ENCODE measurements at regions of chr16 and their contacts with region 1.

Region 1: DNA sequence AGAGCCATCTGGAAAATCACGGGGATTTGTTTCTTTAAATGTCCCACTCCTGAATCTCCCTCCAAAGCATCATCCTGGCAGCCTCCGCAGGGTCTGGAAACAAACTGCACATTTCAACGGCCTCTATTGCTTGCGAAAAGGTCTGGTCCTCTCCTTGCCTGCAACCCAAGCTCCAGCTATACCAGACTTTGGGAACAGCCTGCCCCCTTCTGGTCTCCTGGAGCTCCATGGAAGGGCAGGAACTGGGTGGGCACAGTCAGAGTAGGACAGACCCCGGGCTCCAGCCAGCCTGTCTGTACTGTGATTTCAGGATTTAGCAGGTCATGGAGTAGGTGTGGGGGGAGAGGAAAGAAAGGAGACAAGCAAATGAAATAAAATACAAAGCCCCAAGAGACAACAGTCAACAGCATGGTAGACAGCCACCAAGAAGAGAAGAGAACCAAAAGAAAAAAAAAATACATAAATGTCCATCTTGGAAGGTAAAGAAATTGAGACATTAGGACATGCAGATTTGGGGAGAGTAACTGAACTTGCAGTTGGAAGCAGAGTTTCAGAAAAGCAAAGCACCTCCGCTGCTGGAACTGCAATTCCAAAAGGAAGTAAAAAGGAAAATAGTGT is 2.7 kb downstream of the XYLT1 start:
- DNase-seq: peak; percentile 77
- ATAC-seq: peak; percentile 78
- H3K4me3 Mint-ChIP-seq: peak overlapping the region; percentile 39; the same call in 1 of the 2 replicates
- H3K27ac Mint-ChIP-seq: no peak overlapping the region
- H3K4me1 Mint-ChIP-seq: peaks cover 54% of the 10 kb centered on the region
- H3K27me3 Mint-ChIP-seq: peaks cover 16% of the 10 kb centered on the region
- CTCF ChIP-seq: no peak

Region 2: DNA sequence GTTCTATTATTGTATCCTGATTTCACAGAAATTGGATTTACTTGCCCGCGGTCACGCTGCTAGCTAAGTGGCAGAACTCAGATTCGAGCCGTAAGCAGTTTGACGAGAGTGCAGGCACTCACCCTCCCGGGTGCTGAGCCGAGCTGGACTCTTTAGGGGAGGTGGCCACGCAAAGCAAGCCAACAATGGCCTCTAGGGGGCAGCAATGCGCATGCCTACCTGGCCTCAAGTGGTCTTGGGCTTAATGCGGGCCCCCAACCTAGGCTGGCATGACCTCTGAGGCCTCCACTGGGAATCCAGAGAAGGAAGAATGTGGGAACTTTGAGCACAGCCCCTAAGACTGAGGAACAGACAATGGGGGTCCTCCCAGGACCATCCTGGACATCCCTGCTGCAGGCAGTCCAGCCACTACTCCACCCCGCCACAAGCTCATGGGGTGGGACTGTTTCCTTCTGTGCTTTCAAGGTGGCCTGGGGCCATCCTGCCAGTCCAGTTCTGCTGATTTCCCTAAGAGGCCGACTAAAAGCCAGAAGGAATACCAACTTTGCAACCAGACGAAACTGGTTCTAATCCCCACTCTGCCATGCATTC is 273.7 kb before region 1 on chr16:
- CTCF ChIA-PET with region 1: interaction called, 14 read pairs
- POLR2A ChIA-PET with region 1: no interaction called
- DNase-seq: peak; percentile 87
- ATAC-seq: peak; percentile 97
- H3K4me3 Mint-ChIP-seq: no peak overlapping the region
- H3K27ac Mint-ChIP-seq: no peak overlapping the region
- H3K4me1 Mint-ChIP-seq: peaks cover 3% of the 10 kb centered on the region
- H3K27me3 Mint-ChIP-seq: no peaks in the 10 kb centered on the region
- CTCF ChIP-seq: peak; percentile 78

Region 3: DNA sequence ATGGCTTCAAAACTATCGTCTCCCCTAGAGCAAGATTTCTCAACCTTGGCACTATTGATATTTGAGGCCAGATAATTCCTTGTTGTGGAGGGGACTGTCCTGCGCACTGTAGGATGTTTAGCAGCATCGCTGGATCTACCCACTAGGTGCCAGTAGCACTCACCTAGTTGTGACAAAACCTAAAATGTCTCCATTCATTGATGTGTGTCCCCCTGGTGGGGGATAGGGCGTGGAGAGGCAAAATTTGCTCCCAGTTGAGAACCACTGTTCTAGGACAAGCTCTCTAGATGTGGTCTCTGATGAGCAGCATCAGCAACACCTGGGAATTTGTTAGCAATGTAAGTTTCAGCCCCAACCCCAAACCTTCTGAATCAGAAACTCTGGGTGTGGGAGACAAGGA is 256.2 kb before region 1 on chr16:
- CTCF ChIA-PET with region 1: interaction called, 25 read pairs
- POLR2A ChIA-PET with region 1: no interaction called
- DNase-seq: peak; percentile 65
- ATAC-seq: peak; percentile 95
- H3K4me3 Mint-ChIP-seq: no peak overlapping the region
- H3K27ac Mint-ChIP-seq: no peak overlapping the region
- H3K4me1 Mint-ChIP-seq: peaks cover 19% of the 10 kb centered on the region
- H3K27me3 Mint-ChIP-seq: no peaks in the 10 kb centered on the region
- CTCF ChIP-seq: peak; percentile 50

Region 4: DNA sequence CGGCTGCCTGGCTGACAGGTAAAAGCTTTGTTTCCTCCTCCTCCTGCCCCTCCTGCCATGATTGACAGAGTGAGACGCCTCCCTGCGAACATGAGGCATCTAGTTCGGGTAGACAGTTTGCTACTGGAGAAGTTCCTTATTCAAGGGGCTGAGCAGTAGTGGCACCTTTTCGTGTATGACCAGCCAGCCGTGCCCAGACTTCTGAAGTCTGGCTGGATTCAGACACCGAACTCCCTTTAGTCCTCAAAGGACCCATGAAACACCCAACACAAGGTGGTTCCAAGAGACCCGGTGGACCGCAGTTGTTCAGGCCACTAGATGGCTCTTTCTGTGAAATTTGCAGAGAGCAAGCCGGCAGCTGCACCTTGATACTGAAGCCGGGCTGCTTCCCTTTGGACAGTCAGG is 190.1 kb before region 1 on chr16:
- CTCF ChIA-PET with region 1: interaction called, 57 read pairs
- POLR2A ChIA-PET with region 1: no interaction called
- DNase-seq: peak; percentile 62
- ATAC-seq: peak; percentile 83
- H3K4me3 Mint-ChIP-seq: no peak overlapping the region
- H3K27ac Mint-ChIP-seq: no peak overlapping the region
- H3K4me1 Mint-ChIP-seq: peaks cover 27% of the 10 kb centered on the region
- H3K27me3 Mint-ChIP-seq: no peaks in the 10 kb centered on the region
- CTCF ChIP-seq: no peak

Region 5: DNA sequence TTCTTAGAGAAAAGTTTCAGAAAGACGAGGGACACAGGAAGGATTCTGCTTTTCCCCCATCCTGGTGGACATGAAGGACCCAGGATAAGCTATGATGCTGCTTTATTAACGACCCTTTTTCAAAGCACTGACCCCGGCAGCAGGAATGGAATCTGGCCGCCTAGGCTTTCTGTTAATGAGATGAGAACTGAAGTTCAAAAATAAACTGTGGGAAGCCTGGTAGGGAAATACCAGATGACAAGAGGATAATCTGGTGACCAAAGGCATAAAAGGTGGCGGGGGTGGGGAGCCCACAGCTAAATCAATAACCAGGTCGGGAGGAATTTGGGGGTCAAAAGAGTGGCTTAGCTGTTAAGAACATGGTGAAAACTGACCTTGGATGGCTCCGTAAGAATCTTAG is 168.2 kb before region 1 on chr16:
- CTCF ChIA-PET with region 1: interaction called, 12 read pairs
- POLR2A ChIA-PET with region 1: no interaction called
- DNase-seq: no peak
- ATAC-seq: no peak
- H3K4me3 Mint-ChIP-seq: no peak overlapping the region
- H3K27ac Mint-ChIP-seq: peak overlapping the region; percentile 91; the same call in 1 of the 2 replicates
- H3K4me1 Mint-ChIP-seq: peaks cover 63% of the 10 kb centered on the region
- H3K27me3 Mint-ChIP-seq: no peaks in the 10 kb centered on the region
- CTCF ChIP-seq: no peak

Region 6: GRCh38 chr16:17369421-17370222 is 98.4 kb before region 1 on chr16:
- CTCF ChIA-PET with region 1: interaction called, 22 read pairs
- POLR2A ChIA-PET with region 1: no interaction called
- DNase-seq: no peak
- ATAC-seq: no peak
- H3K4me3 Mint-ChIP-seq: no peak overlapping the region; the same call in 1 of the 2 replicates
- H3K27ac Mint-ChIP-seq: peak overlapping the region; percentile 79
- H3K4me1 Mint-ChIP-seq: peaks cover 85% of the 10 kb centered on the region
- H3K27me3 Mint-ChIP-seq: no peaks in the 10 kb centered on the region
- CTCF ChIP-seq: no peak

Region 7: GRCh38 chr16:17423221-17423620 is 44.8 kb before region 1 on chr16:
- CTCF ChIA-PET with region 1: interaction called, 13 read pairs
- POLR2A ChIA-PET with region 1: no interaction called
- DNase-seq: peak; percentile 19
- ATAC-seq: peak; percentile 95
- H3K4me3 Mint-ChIP-seq: no peak overlapping the region
- H3K27ac Mint-ChIP-seq: peak overlapping the region; percentile 96
- H3K4me1 Mint-ChIP-seq: peaks cover 34% of the 10 kb centered on the region
- H3K27me3 Mint-ChIP-seq: no peaks in the 10 kb centered on the region
- CTCF ChIP-seq: no peak

Region 8: DNA sequence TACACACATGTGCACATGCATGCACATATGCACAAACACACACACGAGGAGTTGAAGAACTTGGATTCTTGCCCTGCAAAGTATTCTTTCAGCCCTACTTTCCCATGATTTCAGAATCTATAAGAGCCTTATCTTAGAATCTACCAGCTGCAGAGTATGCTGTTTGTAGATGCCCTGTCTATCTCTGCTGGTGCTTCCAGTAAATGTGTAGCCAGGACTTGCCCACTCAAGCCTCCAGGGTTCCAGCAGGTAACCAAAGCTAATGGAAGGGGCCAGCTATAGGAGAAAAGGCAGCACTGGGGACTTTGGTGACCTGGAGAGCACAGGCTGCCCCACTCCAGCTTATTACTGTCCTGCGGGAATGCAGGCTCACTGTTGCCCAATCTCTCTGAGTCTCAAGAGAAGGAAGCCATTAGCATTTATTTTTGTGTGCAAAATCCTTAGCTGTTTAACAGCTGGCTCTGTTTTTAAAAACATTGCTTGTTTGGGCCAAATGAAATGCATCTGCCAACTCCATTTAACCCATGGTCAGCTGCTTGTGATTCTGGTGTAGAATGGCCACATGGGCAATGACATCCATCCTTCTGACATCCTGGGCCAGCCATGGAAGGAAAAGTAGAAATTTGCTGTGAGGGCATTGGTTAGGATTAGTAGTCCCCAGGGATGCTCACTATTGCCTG is 31.3 kb after region 1 on chr16:
- CTCF ChIA-PET with region 1: no interaction called
- POLR2A ChIA-PET with region 1: no interaction called
- DNase-seq: no peak
- ATAC-seq: no peak
- H3K4me3 Mint-ChIP-seq: no peak overlapping the region
- H3K27ac Mint-ChIP-seq: no peak overlapping the region
- H3K4me1 Mint-ChIP-seq: peaks cover 6% of the 10 kb centered on the region
- H3K27me3 Mint-ChIP-seq: no peaks in the 10 kb centered on the region; the same call in 1 of the 2 replicates
- CTCF ChIP-seq: no peak

Region 9: GRCh38 chr16:17515421-17516210 is 47.6 kb after region 1 on chr16:
- CTCF ChIA-PET with region 1: no interaction called
- POLR2A ChIA-PET with region 1: no interaction called
- DNase-seq: no peak
- ATAC-seq: no peak
- H3K4me3 Mint-ChIP-seq: no peak overlapping the region
- H3K27ac Mint-ChIP-seq: no peak overlapping the region
- H3K4me1 Mint-ChIP-seq: no peaks in the 10 kb centered on the region
- H3K27me3 Mint-ChIP-seq: peaks cover 17% of the 10 kb centered on the region
- CTCF ChIP-seq: no peak

Measured in WTC11 (cell line).